ENCODE measurements at regions of chr20 and their contacts with region 1.

Region 1: GRCh38 chr20:14498772-14499171 is 161.4 kb upstream of the FLRT3 start:
- DNase-seq: peak in 2 of 4 donors; percentile 14 to 50
- ATAC-seq: peak; percentile 23
- H3K4me3 ChIP-seq: no peak overlapping the region
- H3K27ac ChIP-seq: no peak overlapping the region
- H3K4me1 ChIP-seq: no peaks in the 10 kb centered on the region
- H3K27me3 ChIP-seq: no peaks in the 10 kb centered on the region
- CTCF ChIP-seq: no peak

Region 2: GRCh38 chr20:14481863-14482262 is 16.9 kb before region 1 on chr20:
- intact Hi-C with region 1: loop called in 1 of 2 experiments (anchors 2 kb)
- DNase-seq: no peak
- ATAC-seq: no peak
- H3K4me3 ChIP-seq: no peak overlapping the region
- H3K27ac ChIP-seq: no peak overlapping the region
- H3K4me1 ChIP-seq: no peaks in the 10 kb centered on the region
- H3K27me3 ChIP-seq: no peaks in the 10 kb centered on the region
- CTCF ChIP-seq: no peak